Right ventricle myocardium inferior (tissue), 1 donor: ENCODE measurements at regions of chr5 and their contacts with region 1.

Region 1: GRCh38 chr5:53109443-53110127 is at the start of gene MOCS2:
- DNase-seq: peak; percentile 95
- ATAC-seq: peak; percentile 100
- total RNA-seq, gene MOCS2: 93.6 TPM

Region 2: GRCh38 chr5:52799983-52800393 is 309.6 kb before region 1 on chr5:
- intact Hi-C with region 1: loop called (anchors 10 kb)
- DNase-seq: peak; percentile 96
- ATAC-seq: peak; percentile 95

Region 3: GRCh38 chr5:53368516-53368915 is 258.9 kb after region 1 on chr5:
- intact Hi-C with region 1: no loop called
- DNase-seq: no peak
- ATAC-seq: no peak